Heart left ventricle (tissue), 16 donors: ENCODE measurements at regions of chr9 and their contacts with region 1.

Region 1: GRCh38 chr9:77149879-77150278 is 27.5 kb upstream of the VPS13A start:
- DNase-seq: no peak
- ATAC-seq: no peak
- H3K4me3 ChIP-seq: no peak overlapping the region
- H3K27ac ChIP-seq: no peak overlapping the region
- H3K4me1 ChIP-seq: no peaks in the 10 kb centered on the region
- H3K27me3 ChIP-seq: peaks cover 0 to 2% (median 0%) of the 10 kb centered on the region in 9 donors
- CTCF ChIP-seq: no peak
- POLR2A ChIP-seq: no peak

Region 2: GRCh38 chr9:76803083-76803482 is 346.8 kb before region 1 on chr9:
- intact Hi-C with region 1: loop called in 1 of 10 experiments (anchors 5 kb)
- DNase-seq: no peak
- ATAC-seq: no peak
- H3K4me3 ChIP-seq: no peak overlapping the region
- H3K27ac ChIP-seq: no peak overlapping the region
- H3K4me1 ChIP-seq: no peaks in the 10 kb centered on the region
- H3K27me3 ChIP-seq: peaks cover 0 to 9% (median 0%) of the 10 kb centered on the region in 9 donors
- CTCF ChIP-seq: no peak
- POLR2A ChIP-seq: no peak

Region 3: GRCh38 chr9:76818271-76818670 is 331.6 kb before region 1 on chr9:
- intact Hi-C with region 1: loop called in 4 of 10 experiments (anchors 2 to 5 kb)
- DNase-seq: peak in 4 of 5 donors; percentile 31 to 82 (median 63)
- ATAC-seq: peak; percentile 88 to 100 (median 96)
- H3K4me3 ChIP-seq: no peak overlapping the region
- H3K27ac ChIP-seq: peak overlapping the region in 6 of 12 donors; percentile 30 to 79 (median 50)
- H3K4me1 ChIP-seq: peaks cover 0 to 9% (median 0%) of the 10 kb centered on the region in 12 donors
- H3K27me3 ChIP-seq: peaks cover 0 to 9% (median 0%) of the 10 kb centered on the region in 9 donors
- CTCF ChIP-seq: no peak
- POLR2A ChIP-seq: no peak